ENCODE measurements at regions of chr4 and their contacts with region 1.

Region 1: DNA sequence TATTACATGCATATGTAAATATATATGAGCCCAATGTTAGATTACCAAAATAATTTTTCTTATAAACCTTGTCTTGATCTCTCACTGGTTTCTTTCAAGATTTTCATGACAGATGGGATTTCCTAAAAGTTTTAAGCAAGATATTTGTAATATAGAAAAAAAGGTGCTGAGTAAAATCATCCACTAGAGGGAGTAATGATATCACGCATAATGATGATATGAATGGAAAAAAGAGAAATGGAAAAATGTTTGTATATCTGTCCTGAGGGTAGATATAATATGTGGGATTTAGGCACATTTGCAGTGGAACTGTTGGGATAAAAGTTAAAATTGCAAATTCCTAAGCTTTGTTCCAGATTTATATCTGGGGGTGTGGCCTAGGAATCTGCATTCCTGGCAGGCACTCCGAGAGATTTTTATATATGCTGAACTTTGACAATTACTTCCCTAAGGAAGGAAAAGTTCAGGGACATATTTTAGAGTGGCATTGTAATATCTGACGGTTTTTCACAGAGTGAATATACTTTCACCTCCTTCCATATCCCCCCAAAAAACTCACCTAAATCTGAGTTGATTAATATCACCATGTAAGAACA is 60.5 kb downstream of the TMA16 start:
- DNase-seq: no peak
- H3K4me3 ChIP-seq: no peak overlapping the region
- H3K27ac ChIP-seq: no peak overlapping the region
- H3K4me1 ChIP-seq: peaks cover 0 to 5% of the 10 kb centered on the region in 2 donors
- H3K27me3 ChIP-seq: no peaks in the 10 kb centered on the region
- CTCF ChIP-seq: peak in 5 of 6 experiments; percentile 7 to 71 (median 50)
- POLR2A ChIP-seq: no peak

Region 2: GRCh38 chr4:162938738-162939485 is 616.1 kb before region 1 on chr4:
- intact Hi-C with region 1: no loop called
- DNase-seq: no peak
- H3K4me3 ChIP-seq: no peak overlapping the region
- H3K27ac ChIP-seq: no peak overlapping the region
- H3K4me1 ChIP-seq: no peaks in the 10 kb centered on the region
- H3K27me3 ChIP-seq: no peaks in the 10 kb centered on the region
- CTCF ChIP-seq: no peak
- POLR2A ChIP-seq: no peak

Region 3: GRCh38 chr4:163003979-163004378 is 551.0 kb before region 1 on chr4:
- intact Hi-C with region 1: no loop called
- DNase-seq: no peak
- H3K4me3 ChIP-seq: no peak overlapping the region
- H3K27ac ChIP-seq: no peak overlapping the region
- H3K4me1 ChIP-seq: no peaks in the 10 kb centered on the region
- H3K27me3 ChIP-seq: no peaks in the 10 kb centered on the region
- CTCF ChIP-seq: no peak
- POLR2A ChIP-seq: no peak

Region 4: GRCh38 chr4:163295138-163295537 is 259.8 kb before region 1 on chr4:
- intact Hi-C with region 1: no loop called
- DNase-seq: no peak
- H3K4me3 ChIP-seq: no peak overlapping the region
- H3K27ac ChIP-seq: no peak overlapping the region
- H3K4me1 ChIP-seq: no peaks in the 10 kb centered on the region
- H3K27me3 ChIP-seq: no peaks in the 10 kb centered on the region
- CTCF ChIP-seq: no peak
- POLR2A ChIP-seq: no peak

Region 5: DNA sequence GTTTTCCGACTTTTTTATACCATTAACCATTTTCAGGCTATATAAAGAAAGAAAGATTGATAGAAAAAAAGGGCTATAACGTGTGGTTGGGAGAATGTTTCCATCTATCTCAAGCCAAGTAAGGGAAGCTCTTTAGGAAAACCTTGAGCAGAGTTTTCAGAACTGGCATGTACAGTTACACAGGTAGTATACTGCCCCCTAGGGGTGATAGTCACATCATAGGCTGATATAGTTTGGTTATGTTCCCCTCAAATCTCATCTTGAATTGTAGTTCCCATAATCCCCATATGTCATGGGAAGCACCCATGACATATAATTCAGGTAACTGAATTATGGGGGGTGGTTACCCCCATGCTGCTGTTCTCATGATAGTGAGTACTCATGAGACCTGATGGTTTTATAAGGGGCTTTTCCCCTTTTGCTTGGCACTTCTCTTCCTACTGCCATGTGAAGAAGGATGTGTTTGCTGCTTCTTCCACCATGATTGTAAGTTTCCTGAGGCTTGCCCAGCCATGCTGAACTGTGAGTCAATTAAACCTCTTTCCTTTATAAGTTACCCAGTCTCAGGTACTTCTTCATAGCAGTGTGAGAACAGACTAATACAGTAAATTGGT is 126.3 kb after region 1 on chr4:
- intact Hi-C with region 1: loop called (anchors 10 kb)
- DNase-seq: no peak
- H3K4me3 ChIP-seq: no peak overlapping the region
- H3K27ac ChIP-seq: no peak overlapping the region
- H3K4me1 ChIP-seq: no peaks in the 10 kb centered on the region
- H3K27me3 ChIP-seq: no peaks in the 10 kb centered on the region
- CTCF ChIP-seq: peak in 5 of 6 experiments; percentile 3 to 36 (median 19)
- POLR2A ChIP-seq: no peak

Region 6: GRCh38 chr4:164731827-164732474 is 1177.0 kb after region 1 on chr4:
- intact Hi-C with region 1: loop called (anchors 10 kb)
- DNase-seq: peak; percentile 25 to 46
- H3K4me3 ChIP-seq: no peak overlapping the region
- H3K27ac ChIP-seq: no peak overlapping the region
- H3K4me1 ChIP-seq: no peaks in the 10 kb centered on the region
- H3K27me3 ChIP-seq: no peaks in the 10 kb centered on the region
- CTCF ChIP-seq: peak in 5 of 6 experiments; percentile 50 to 90 (median 69)
- POLR2A ChIP-seq: no peak